ENCODE measurements at regions of chr17 and their contacts with region 1.

Region 1: GRCh38 chr17:40548982-40549685 is 16.1 kb downstream of the CCR7 start:
- DNase-seq: no peak
- ATAC-seq: no peak
- H3K4me3 Mint-ChIP-seq: no peak overlapping the region
- H3K27ac Mint-ChIP-seq: peak overlapping the region; percentile 20
- H3K4me1 Mint-ChIP-seq: peaks cover 73% of the 10 kb centered on the region
- H3K27me3 Mint-ChIP-seq: no peaks in the 10 kb centered on the region

Region 2: DNA sequence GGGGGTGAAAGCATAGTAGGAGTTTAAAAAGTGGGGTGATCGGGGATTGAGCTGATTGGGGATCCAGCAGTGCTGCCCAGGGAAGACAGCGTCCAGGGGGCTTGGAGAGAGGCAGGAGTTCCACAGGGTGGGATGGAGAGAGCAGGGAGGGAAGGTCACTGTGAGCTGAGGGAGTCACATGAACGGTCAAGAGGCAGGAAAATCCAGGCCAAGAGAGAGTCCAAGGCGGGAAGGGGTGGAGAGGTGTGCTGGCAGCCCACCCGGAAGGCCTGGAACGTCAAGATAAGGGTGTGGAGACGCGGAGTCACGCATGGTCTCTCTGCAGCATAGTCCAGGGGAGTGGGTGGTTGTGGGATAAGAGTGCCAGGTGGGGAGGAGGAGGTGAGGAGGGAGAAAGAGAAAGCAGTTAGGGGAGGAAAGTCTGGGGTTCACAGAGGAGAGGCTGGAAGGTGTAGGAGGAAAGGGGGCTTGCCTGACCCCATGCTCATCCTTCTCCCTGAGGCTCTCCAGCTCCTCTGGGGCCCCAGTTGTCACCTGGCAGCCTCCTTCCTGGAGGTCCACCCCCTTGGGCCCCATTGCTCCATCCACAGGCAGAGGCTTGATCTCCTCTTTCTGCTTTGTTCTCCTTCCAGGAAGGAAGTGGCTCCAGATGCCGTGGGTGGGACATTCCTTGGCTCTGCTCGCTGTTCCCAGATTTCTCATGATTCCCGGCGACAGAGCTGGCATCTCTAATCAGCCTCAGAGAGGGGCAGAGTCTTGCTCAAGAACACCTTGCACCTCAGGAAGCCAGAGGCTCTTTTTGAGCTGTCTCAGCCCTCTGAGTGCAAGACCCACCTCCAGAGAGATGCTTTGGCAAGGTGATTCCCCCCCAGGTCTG is 12.6 kb before region 1 on chr17:
- CTCF ChIA-PET with region 1: interaction called, 447 read pairs
- DNase-seq: no peak
- ATAC-seq: no peak
- H3K4me3 Mint-ChIP-seq: no peak overlapping the region
- H3K27ac Mint-ChIP-seq: no peak overlapping the region
- H3K4me1 Mint-ChIP-seq: peaks cover 80% of the 10 kb centered on the region
- H3K27me3 Mint-ChIP-seq: peaks cover 12% of the 10 kb centered on the region